Activated B cell treated with CpG ODN at 0.5 μM for 24 hours (primary cell): ENCODE measurements at regions of chr2 and their contacts with region 1.

Region 1: GRCh38 chr2:120231974-120232635 is 8.9 kb upstream of the TMEM185B start:
- DNase-seq: peak; percentile 31
- ATAC-seq: peak; percentile 90
- H3K4me3 Mint-ChIP-seq: peak overlapping the region; percentile 89
- H3K27ac Mint-ChIP-seq: peak overlapping the region; percentile 90
- H3K4me1 Mint-ChIP-seq: peaks cover 43% of the 10 kb centered on the region
- H3K27me3 Mint-ChIP-seq: no peaks in the 10 kb centered on the region
- CTCF ChIP-seq: no peak

Region 2: DNA sequence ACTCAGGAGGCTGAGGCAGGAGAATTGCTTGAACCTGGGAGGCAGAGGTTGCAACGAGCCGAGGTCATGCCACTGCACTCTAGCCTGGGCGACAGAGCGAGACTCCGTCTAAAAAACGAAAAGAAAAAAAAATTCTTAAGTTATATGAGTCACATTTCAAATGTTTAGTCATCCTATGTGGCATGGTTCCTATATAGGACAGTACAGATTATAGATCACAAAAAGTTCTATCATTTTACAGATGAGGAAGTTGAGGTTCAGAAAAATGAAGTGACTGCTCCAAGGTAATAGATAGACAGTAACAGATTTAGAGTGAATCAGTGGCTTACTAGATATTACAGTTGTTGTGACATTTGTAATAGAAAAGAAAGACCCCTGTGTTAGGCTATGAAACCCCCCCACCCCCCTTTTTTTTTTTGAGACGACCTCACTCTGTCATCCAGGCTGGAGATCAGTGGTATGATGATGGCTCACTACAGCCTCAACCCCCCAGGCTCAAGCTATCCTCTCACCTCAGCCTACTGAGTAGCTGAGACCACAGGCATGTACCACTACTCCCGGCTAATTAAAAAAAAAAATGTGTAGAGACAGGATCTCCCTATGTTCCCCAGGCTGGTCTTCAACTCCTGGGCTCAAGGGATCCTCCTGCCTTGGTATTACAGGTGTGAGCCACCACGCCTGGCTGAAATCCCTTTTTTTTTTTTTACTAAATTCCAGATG is 449.6 kb before region 1 on chr2:
- CTCF ChIA-PET with region 1: no interaction called
- POLR2A ChIA-PET with region 1: interaction called, 10 read pairs
- intact Hi-C with region 1: no loop called
- DNase-seq: no peak
- ATAC-seq: peak; percentile 64
- H3K4me3 Mint-ChIP-seq: no peak overlapping the region
- H3K27ac Mint-ChIP-seq: no peak overlapping the region
- H3K4me1 Mint-ChIP-seq: peaks cover 19% of the 10 kb centered on the region
- H3K27me3 Mint-ChIP-seq: no peaks in the 10 kb centered on the region
- CTCF ChIP-seq: no peak

Region 3: GRCh38 chr2:120287183-120288015 is 55.3 kb after region 1 on chr2:
- CTCF ChIA-PET with region 1: no interaction called
- POLR2A ChIA-PET with region 1: interaction called, 3 read pairs
- intact Hi-C with region 1: loop called (anchors 1 kb)
- DNase-seq: no peak
- ATAC-seq: peak; percentile 95
- H3K4me3 Mint-ChIP-seq: peak overlapping the region; percentile 53
- H3K27ac Mint-ChIP-seq: peak overlapping the region; percentile 89
- H3K4me1 Mint-ChIP-seq: peaks cover 19% of the 10 kb centered on the region
- H3K27me3 Mint-ChIP-seq: no peaks in the 10 kb centered on the region
- CTCF ChIP-seq: no peak

Region 4: GRCh38 chr2:120793677-120794403 is 561.7 kb after region 1 on chr2:
- CTCF ChIA-PET with region 1: no interaction called
- POLR2A ChIA-PET with region 1: no interaction called
- intact Hi-C with region 1: no loop called
- DNase-seq: no peak
- ATAC-seq: no peak
- H3K4me3 Mint-ChIP-seq: no peak overlapping the region
- H3K27ac Mint-ChIP-seq: no peak overlapping the region
- H3K4me1 Mint-ChIP-seq: no peaks in the 10 kb centered on the region
- H3K27me3 Mint-ChIP-seq: no peaks in the 10 kb centered on the region
- CTCF ChIP-seq: no peak